ENCODE measurements at regions of chr20 and their contacts with region 1.

Region 1: GRCh38 chr20:46757754-46758678 is 48.6 kb downstream of the SLC2A10 start:
- DNase-seq: peak; percentile 51
- H3K4me3 ChIP-seq: no peak overlapping the region
- H3K27ac ChIP-seq: no peak overlapping the region
- H3K4me1 ChIP-seq: peaks cover 0 to 4% (median 0%) of the 10 kb centered on the region in 4 donors
- H3K27me3 ChIP-seq: no peaks in the 10 kb centered on the region
- CTCF ChIP-seq: peak; percentile 90 to 96 (median 95)
- EP300 ChIP-seq: no peak
- POLR2A ChIP-seq: no peak

Region 2: DNA sequence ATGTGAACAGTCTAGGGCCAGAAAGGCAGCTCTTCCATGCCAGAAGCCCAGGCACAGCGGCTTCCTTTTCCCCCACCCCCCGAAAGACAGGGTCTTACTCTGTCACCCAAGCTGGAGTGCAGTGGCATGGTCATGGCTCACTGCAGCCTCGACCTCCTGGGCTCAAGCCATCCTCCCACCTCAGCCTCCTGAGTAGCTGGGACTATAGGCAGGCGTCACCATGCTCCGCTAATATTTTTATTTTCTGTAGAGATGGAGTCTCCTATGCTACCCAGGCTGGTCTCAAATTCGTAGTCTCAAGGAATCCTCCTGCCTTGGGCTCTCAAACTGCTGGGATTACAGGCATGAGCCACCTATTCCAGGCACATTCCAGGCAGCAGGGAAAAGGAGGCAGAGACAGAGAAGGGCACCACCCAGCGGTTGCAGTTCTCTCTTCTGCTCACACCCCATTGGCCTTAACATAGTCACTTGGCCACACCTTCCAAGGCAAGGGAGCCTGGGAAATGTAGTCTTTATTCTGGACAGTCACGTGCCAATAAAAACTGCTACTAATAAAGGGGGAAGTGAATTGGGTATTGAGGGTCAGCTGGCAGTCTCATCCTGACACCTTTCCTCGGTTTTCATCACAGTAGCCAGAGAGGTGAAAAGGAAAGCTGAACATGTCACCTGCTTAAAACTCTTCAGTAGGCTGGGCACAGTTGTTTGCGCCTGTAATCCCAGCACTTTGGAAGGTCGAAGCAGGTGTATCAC is 392.6 kb after region 1 on chr20:
- in situ Hi-C with region 1: loop called in 3 of 4 experiments (anchors 10 to 25 kb)
- intact Hi-C with region 1: no loop called
- DNase-seq: peak; percentile 66
- H3K4me3 ChIP-seq: no peak overlapping the region
- H3K27ac ChIP-seq: no peak overlapping the region
- H3K4me1 ChIP-seq: no peaks in the 10 kb centered on the region
- H3K27me3 ChIP-seq: no peaks in the 10 kb centered on the region
- CTCF ChIP-seq: peak; percentile 43 to 65 (median 54)
- EP300 ChIP-seq: no peak
- POLR2A ChIP-seq: no peak

Region 3: GRCh38 chr20:47164140-47164539 is 406.1 kb after region 1 on chr20:
- in situ Hi-C with region 1: loop called in 3 of 4 experiments (anchors 10 to 25 kb)
- intact Hi-C with region 1: no loop called
- DNase-seq: no peak
- H3K4me3 ChIP-seq: no peak overlapping the region
- H3K27ac ChIP-seq: no peak overlapping the region
- H3K4me1 ChIP-seq: no peaks in the 10 kb centered on the region
- H3K27me3 ChIP-seq: no peaks in the 10 kb centered on the region
- CTCF ChIP-seq: no peak
- EP300 ChIP-seq: no peak
- POLR2A ChIP-seq: no peak

Measured in transverse colon (tissue), 4 donors.